ENCODE measurements at regions of chr5 and their contacts with region 1.

Region 1: GRCh38 chr5:4879693-4880303 is 260.3 kb upstream of the ADAMTS16 start:
- DNase-seq: peak; percentile 86
- H3K4me3 Mint-ChIP-seq: no peak overlapping the region
- H3K27ac Mint-ChIP-seq: no peak overlapping the region
- H3K4me1 Mint-ChIP-seq: no peaks in the 10 kb centered on the region
- H3K27me3 Mint-ChIP-seq: no peaks in the 10 kb centered on the region

Region 2: GRCh38 chr5:4405614-4406219 is 474.1 kb before region 1 on chr5:
- intact Hi-C with region 1: no loop called
- DNase-seq: no peak
- H3K4me3 Mint-ChIP-seq: no peak overlapping the region
- H3K27ac Mint-ChIP-seq: no peak overlapping the region
- H3K4me1 Mint-ChIP-seq: no peaks in the 10 kb centered on the region
- H3K27me3 Mint-ChIP-seq: no peaks in the 10 kb centered on the region

Region 3: DNA sequence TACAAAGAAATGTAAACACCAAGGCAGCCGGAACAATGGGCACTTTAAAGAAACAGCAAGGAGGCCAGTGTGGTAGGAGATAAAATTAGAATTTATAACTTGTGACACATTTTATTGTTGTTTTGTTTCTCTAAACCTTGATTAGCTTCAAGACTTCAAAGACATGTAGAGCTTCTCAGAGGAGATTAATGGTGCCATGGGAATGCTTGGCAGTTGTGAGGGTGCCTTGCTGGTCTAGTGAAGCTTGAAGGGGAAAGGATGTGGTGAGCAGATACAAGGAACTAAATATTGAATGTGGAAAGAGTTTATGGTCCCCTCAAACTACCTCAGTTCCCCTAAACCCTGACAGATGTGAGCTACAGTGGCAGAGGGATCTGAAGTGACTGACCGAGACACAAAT is 62.0 kb before region 1 on chr5:
- intact Hi-C with region 1: no loop called
- DNase-seq: no peak
- H3K4me3 Mint-ChIP-seq: no peak overlapping the region
- H3K27ac Mint-ChIP-seq: no peak overlapping the region
- H3K4me1 Mint-ChIP-seq: no peaks in the 10 kb centered on the region
- H3K27me3 Mint-ChIP-seq: no peaks in the 10 kb centered on the region

Region 4: DNA sequence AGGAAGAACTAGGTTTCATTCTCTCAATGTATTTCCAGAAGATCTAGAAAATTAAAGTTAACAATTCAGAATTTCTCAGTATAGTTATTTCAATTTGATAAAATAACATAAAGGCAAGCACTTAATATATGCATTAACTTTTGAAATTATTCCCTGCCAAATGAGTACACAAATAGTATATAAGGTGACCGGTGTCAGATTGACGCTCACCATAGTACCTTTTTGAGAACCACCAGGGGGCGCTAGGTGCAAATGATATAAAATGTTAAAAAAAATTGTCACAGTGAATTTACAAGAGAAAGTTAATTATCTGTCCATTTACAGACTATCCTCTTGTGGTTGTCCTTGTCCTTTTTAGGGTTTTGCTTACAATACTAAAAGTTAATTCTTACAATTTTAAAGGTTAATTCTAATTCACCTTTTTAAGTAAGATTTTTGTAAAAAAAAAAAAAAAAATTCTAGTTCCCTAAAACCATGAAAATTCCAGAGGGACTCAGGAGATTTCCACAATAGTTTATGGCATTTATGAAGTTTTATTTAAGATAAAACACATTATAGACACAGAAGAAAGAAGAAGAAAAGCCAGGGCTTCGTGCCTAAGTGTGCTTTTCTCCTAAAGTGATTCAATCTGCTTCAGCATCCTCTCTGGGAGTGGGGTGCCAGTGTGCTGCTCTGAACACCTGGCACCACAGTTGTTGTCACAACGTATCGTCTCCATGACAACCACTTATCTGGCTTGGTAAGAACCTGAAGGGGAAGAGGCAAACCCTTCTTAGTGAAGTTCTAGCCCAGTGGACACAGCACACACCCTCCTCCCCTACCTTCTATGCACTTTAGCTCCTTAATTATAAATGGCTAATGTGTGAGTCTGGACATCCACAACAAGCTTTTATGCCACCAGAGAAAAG is 262.1 kb after region 1 on chr5:
- intact Hi-C with region 1: loop called (anchors 5 kb)
- DNase-seq: peak; percentile 83
- H3K4me3 Mint-ChIP-seq: no peak overlapping the region
- H3K27ac Mint-ChIP-seq: no peak overlapping the region
- H3K4me1 Mint-ChIP-seq: peaks cover 4% of the 10 kb centered on the region
- H3K27me3 Mint-ChIP-seq: peaks cover 20% of the 10 kb centered on the region